Cardiac septum (tissue), 1 donor: ENCODE measurements at regions of chrX and their contacts with region 1.

Region 1: GRCh38 chrX:100685284-100685996 is 41.4 kb downstream of the SRPX2 start:
- DNase-seq: no peak

Region 2: GRCh38 chrX:100768679-100769338 is 83.4 kb after region 1 on chrX:
- intact Hi-C with region 1: loop called (anchors 2 kb)
- DNase-seq: peak; percentile 89